MCF 10A (cell line): ENCODE measurements at regions of chr3 and their contacts with region 1.

Region 1: DNA sequence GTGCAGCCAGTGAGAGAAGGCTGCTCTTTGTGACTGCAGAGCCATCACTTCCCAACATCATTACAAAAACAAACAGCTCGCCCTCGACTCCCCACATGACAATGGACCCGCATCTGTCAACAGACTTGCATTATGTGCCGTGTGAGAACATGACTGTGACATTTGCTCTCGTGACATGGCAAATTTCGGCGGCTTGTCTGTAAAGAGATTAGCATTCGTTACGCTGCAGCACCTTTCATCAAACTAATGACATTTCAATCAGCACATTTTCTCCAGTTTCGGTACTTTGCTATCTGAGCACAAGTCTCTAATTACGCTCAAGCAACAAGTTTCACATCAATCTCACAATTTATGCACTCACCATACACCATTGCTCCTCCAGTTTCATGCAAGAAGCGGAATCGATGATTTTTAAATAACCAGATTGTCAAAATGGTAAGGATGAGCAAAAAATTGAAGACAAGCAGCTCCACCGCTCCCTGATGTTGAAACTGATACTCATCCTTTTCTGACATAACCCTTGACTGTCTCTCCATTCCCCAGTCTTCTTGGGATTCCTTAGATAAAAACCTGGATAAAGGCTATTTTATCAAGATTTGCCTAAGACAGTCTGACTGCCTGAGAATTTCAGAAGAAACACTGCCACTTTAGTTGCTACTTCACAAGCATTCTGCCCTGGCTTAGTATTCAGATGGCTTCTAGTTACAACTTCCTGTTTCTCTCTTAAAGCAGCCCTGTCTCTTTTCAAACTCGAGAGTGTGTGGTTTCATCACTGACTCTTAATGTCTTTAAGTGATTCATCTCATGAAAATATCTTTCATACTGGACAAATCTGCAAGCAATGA is at the start of gene SLC9A9:
- DNase-seq: peak; percentile 78
- H3K4me3 Mint-ChIP-seq: peak within 1 kb of the TSS; percentile 97
- H3K27ac Mint-ChIP-seq: peak within 1 kb of the TSS; percentile 91
- H3K4me1 Mint-ChIP-seq: peaks cover 49% of the 10 kb centered on the region
- H3K27me3 Mint-ChIP-seq: no peaks in the 10 kb centered on the region
- CTCF ChIP-seq: no peak
- total RNA-seq, gene SLC9A9: 2.0 and 2.2 TPM in 2 replicates

Region 2: DNA sequence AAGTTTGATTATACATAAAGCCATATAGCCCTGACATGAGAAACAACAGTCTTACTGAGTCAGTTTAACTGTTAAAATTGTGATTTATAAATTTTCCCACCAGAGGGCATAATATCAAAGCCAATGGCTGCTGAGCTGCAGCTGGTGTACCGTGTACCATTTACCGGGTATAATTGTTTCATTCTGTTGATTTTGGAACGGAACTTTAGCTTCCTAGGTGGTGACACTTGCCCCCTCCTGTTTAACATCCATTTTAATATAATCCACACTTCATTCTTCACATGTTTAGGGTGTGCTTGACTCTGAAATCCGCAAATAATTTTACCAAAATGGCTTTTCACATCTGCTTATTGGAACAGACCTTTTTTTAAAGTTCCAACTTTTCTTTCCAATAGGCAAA is 72.5 kb before region 1 on chr3:
- CTCF ChIA-PET with region 1: interaction called, 5 read pairs
- POLR2A ChIA-PET with region 1: interaction called, 13 read pairs
- intact Hi-C with region 1: loop called (anchors 5 kb)
- DNase-seq: peak; percentile 45
- H3K4me3 Mint-ChIP-seq: no peak overlapping the region
- H3K27ac Mint-ChIP-seq: no peak overlapping the region
- H3K4me1 Mint-ChIP-seq: peaks cover 5% of the 10 kb centered on the region
- H3K27me3 Mint-ChIP-seq: no peaks in the 10 kb centered on the region
- CTCF ChIP-seq: peak; percentile 57

Region 3: DNA sequence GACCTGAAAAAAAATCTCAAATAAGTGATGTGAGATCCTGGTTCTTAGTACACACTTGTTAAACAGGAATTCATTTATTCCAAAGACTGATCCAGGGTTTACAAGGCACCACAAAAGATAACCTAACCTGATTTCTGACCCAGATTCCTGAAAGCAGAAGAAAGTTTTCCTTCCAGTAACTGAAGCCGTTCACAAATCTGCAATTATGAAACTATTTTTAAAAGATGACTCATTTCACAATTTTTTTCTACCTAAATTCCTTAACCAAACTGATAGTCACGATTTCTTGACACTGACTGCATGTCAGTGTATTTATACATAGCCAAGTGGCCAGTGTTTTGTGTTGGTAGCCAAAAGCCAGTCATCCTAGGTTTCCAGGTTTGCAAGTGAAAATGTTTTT is 16.8 kb before region 1 on chr3:
- CTCF ChIA-PET with region 1: no interaction called
- POLR2A ChIA-PET with region 1: interaction called, 21 read pairs
- intact Hi-C with region 1: no loop called
- DNase-seq: peak; percentile 43
- H3K4me3 Mint-ChIP-seq: no peak overlapping the region
- H3K27ac Mint-ChIP-seq: no peak overlapping the region
- H3K4me1 Mint-ChIP-seq: peaks cover 20% of the 10 kb centered on the region
- H3K27me3 Mint-ChIP-seq: no peaks in the 10 kb centered on the region
- CTCF ChIP-seq: no peak